ENCODE measurements at regions of chr19 and their contacts with region 1.

Region 1: GRCh38 chr19:19113040-19113626 is 25.1 kb downstream of the TMEM161A start:
- DNase-seq: no peak

Region 2: GRCh38 chr19:19081642-19082151 is 31.4 kb before region 1 on chr19:
- intact Hi-C with region 1: loop called in 1 of 2 experiments (anchors 1 kb)
- DNase-seq: no peak

Region 3: DNA sequence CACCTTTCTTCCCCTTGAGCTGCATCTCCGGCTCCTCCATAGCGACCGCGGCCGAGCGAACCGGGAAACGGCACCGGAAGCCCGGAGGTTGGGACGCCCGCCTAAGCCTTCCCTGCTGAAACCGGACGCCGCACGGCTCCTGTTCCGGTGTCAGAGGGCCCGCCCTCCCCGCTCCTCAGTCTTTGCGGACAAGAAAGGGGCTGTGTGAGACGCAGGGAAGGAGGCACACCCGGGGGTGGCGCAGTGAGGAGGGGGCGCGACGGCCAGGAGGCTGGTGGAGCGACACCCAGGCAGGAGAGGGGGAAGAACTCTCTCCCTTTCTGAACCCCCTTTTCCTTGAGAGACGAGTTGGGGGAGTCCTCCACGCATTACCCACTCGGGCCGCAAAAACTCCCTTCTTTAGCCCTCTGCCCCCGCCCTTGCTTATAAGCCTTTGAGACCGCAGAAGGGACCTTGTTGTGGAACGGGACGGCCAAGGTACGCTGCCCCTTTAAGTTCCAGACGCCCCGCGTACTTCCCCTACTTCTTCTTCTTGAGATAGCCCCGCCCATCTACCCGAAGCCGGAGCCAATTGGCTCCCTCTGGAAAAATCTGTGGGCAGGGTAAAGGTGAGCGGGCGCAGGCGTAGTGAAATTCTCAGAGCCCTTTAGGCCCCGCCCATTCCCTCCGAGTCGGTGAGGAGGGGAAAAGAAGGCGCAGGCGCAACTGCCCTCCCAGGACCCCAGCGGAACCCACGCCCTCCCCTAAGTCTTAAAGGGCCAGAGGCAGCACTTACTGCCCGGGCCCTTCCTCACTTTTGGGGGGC is 79.1 kb after region 1 on chr19 and contains the starts of genes BORCS8 and RFXANK:
- intact Hi-C with region 1: no loop called
- DNase-seq: peak; percentile 99
- total RNA-seq, gene BORCS8: 16.2 to 19.4 TPM
- total RNA-seq, gene RFXANK: 32.8 to 36.6 TPM

Region 4: GRCh38 chr19:19280561-19280960 is 167.4 kb after region 1 on chr19:
- intact Hi-C with region 1: no loop called
- DNase-seq: no peak

Measured in posterior vena cava (tissue), 2 donors.